Tibial artery (tissue), 4 donors: ENCODE measurements at regions of chr10 and their contacts with region 1.

Region 1: GRCh38 chr10:60208676-60209269 is 180.9 kb downstream of the ANK3 start:
- DNase-seq: no peak
- H3K4me3 ChIP-seq: no peak overlapping the region
- H3K27ac ChIP-seq: no peak overlapping the region
- H3K4me1 ChIP-seq: peaks cover 0 to 3% (median 0%) of the 10 kb centered on the region in 4 donors
- H3K27me3 ChIP-seq: no peaks in the 10 kb centered on the region
- CTCF ChIP-seq: peak; percentile 77 to 89

Region 2: GRCh38 chr10:60099998-60100747 is 108.6 kb before region 1 on chr10:
- intact Hi-C with region 1: loop called (anchors 5 kb)
- DNase-seq: no peak
- H3K4me3 ChIP-seq: no peak overlapping the region
- H3K27ac ChIP-seq: no peak overlapping the region
- H3K4me1 ChIP-seq: peaks cover 0 to 20% (median 8%) of the 10 kb centered on the region in 4 donors
- H3K27me3 ChIP-seq: no peaks in the 10 kb centered on the region
- CTCF ChIP-seq: peak; percentile 47 to 72

Region 3: DNA sequence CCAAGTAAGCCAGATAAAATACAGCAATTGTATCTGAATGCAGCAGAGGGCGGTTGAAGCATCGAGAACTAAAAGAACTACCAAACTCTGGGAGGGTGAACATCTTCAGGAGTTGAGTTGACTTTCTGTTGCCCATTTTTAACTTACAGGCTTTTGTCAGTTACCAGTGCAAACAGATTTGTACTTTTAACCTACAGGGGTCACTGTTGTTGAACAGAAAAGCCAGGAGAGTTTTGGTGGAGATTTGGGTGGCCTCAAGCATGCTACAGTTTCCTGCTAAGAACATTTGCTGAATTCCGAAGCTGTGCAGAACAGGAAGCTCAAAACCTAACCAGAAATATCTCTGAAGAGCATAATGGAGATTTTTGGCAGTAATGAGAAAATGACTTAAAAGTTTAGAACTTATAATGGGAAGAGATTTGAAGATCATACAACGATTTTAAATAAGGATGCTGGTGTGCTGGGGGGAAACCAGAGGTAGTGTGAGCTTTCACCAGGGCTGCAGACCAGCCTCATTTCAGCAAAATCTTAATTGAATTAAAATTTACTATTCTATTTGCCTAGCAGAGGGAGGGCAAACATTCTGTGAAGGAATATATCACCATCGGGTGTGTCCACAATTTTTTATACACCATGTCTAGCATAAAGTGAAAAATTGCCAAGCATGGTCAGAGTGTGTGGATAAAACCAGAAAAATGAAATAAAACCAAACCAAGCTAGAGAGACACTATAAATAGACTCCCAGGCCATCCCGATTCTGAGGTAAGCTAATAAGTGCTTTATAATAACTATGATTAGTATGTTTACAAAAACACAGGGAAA is 93.8 kb before region 1 on chr10:
- intact Hi-C with region 1: loop called (anchors 5 kb)
- DNase-seq: no peak
- H3K4me3 ChIP-seq: no peak overlapping the region
- H3K27ac ChIP-seq: no peak overlapping the region
- H3K4me1 ChIP-seq: peaks cover 0 to 12% (median 0%) of the 10 kb centered on the region in 4 donors
- H3K27me3 ChIP-seq: no peaks in the 10 kb centered on the region
- CTCF ChIP-seq: peak; percentile 59 to 63

Region 4: DNA sequence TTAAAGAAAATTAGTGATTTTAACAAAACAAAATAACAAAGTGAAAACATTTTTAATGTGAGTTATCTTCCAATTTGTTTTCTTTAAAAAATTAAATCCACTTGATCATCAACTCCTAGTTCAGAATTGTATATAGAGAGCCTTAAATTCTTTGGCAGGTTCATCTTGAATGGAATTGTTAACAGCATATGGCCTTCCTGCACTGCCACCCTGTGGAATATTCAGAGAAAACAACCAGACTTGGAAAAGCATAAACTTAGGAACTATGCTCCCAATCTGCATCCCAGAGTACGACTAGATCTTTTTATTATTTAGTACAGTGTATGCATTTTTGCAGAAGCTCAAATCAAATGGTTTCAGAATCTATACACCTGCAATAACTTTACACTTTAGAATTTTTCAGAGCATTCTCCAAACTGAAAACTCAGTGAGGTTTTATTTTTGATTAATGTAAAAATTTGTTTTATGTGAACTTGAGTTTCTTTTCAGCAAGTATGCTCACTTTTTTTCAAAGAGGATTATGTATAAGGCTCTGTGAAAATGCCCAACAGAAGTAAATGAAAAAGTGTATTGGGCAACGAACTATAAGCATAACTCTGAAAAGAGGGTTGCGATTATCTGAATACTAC is 225.8 kb after region 1 on chr10:
- intact Hi-C with region 1: loop called (anchors 10 kb)
- DNase-seq: peak in 1 of 2 donors; percentile 26
- H3K4me3 ChIP-seq: no peak overlapping the region
- H3K27ac ChIP-seq: no peak overlapping the region
- H3K4me1 ChIP-seq: peaks cover 0 to 26% (median 5%) of the 10 kb centered on the region in 4 donors
- H3K27me3 ChIP-seq: no peaks in the 10 kb centered on the region
- CTCF ChIP-seq: peak; percentile 66 to 75